ENCODE measurements at regions of chr11 and their contacts with region 1.

Region 1: GRCh38 chr11:65779851-65780577 is 762 bp downstream of the AP5B1 start:
- DNase-seq: peak; percentile 92
- CTCF ChIP-seq: peak; percentile 99

Region 2: DNA sequence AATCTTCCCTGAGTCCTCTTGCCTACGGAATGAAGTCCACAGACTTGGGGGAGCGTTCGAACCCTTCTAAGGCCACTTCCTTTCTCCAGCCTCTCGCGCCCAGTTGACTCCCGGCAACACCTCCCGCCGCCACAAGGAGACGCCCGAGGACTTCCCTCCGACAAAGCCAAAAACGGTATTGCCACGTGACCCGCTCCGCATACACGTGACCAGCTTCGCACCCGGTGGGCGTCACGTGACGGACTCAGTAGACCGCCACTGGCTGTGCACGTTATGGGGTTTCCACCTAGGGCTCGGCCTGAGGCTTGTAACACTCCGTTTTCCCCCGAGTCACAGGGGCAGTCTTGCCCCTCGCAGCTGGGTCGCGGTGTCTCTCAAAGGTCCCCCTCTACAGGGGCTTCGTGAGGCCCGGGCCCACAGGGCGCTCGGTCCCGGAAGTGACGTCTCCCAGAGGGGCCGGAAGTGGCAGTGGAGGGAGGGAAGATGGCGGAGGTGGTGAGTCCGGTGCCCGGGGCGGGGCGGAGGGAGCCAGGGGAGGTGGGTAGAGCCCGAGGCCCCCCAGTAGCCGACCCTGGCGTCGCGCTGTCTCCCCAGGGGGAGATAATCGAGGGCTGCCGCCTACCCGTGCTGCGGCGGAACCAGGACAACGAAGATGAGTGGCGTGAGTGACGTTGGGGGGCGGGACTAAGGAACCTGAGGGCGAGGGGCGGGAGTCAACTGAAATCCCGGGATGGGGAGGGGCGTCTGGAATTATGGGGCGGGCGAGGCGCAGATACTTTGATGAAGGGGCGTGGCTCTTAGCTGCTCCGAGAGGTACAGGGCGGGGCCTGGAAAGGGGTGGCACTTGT is 68.0 kb before region 1 on chr11 and contains the start of gene KAT5:
- CTCF ChIA-PET with region 1: interaction called, 41 read pairs
- POLR2A ChIA-PET with region 1: no interaction called
- DNase-seq: peak; percentile 92
- CTCF ChIP-seq: peak; percentile 96

Region 3: GRCh38 chr11:65736810-65737209 is 43.2 kb before region 1 on chr11:
- CTCF ChIA-PET with region 1: interaction called, 19 read pairs
- POLR2A ChIA-PET with region 1: no interaction called
- DNase-seq: no peak
- CTCF ChIP-seq: no peak

Region 4: GRCh38 chr11:65802841-65803240 is 22.8 kb after region 1 on chr11:
- CTCF ChIA-PET with region 1: interaction called, 23 read pairs
- POLR2A ChIA-PET with region 1: interaction called, 3 read pairs
- DNase-seq: peak; percentile 84
- CTCF ChIP-seq: no peak

Region 5: DNA sequence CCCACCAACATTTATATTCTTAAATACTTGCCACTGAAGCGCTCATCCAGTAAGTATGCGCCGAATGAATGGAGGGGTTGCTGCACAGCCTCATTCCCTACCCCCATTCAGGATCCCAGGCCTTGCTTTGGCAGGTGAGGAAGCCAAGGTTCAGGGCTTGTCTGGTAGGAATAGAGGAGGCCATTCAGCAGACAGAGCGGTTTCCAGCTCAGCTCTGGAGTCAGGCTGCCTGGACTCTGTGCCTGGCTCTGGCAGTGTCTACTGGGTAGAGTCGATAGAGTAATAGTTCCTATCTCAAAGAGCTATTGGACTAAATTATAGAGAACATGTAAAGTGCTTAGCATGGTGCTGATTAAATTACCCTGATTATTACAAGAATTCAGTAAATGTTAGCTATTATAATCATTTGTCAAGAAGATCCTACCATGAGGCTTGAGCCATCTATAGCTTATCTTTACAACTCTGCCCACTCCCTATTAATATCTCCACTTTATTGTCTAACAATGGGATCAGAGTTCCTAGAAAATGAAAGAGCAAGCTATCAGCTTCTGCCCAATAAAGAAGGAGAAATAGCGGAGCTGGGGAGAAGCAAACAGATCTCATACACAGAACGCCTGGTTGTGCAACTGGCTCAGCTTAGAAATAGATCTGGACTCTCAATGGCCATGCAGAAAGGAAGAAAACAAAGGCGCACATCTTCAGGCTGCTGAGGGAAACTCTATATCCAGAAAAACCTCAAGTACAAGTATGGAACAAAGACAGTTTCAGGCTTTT is 47.1 kb after region 1 on chr11:
- CTCF ChIA-PET with region 1: interaction called, 22 read pairs
- POLR2A ChIA-PET with region 1: no interaction called
- DNase-seq: no peak
- CTCF ChIP-seq: no peak

Region 6: DNA sequence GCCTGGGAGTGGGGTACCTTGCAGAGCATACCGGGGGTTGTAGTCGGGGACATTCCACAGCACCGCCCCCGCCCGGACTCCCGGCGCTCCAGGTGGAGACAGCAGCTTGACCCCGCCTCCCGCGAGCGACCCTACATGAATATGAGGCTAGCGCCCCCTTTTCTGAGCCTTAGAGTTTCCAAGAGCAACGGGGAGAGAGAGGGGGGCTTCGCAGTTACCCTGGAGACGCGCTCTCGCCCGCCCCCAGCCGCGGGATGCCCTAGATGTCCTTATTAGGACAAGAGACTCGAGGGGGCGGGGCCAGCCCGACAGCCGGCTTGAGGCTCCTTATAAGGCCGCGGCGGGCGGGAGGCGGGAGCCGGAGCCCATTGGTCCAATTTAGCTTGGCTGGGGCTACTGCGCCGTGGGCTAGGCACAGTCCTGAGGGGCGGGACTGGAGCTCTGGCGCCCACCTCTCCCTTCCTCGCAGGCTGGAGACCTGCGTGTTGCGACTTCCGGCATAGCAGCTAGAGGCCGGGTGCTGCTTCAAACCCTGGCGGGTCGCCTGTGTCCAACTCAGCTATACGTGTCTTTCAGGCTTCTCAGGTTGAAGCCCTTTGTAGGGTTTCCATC is 79.3 kb after region 1 on chr11:
- CTCF ChIA-PET with region 1: interaction called, 14 read pairs
- POLR2A ChIA-PET with region 1: no interaction called
- DNase-seq: peak; percentile 95
- CTCF ChIP-seq: peak; percentile 6

Region 7: GRCh38 chr11:65988791-65989592 is 209.0 kb after region 1 on chr11:
- CTCF ChIA-PET with region 1: interaction called, 14 read pairs
- POLR2A ChIA-PET with region 1: no interaction called
- DNase-seq: peak; percentile 91
- CTCF ChIP-seq: peak; percentile 99

Measured in GM10248 (cell line).